A673 (cell line): ENCODE measurements at regions of chrX and their contacts with region 1.

Region 1: DNA sequence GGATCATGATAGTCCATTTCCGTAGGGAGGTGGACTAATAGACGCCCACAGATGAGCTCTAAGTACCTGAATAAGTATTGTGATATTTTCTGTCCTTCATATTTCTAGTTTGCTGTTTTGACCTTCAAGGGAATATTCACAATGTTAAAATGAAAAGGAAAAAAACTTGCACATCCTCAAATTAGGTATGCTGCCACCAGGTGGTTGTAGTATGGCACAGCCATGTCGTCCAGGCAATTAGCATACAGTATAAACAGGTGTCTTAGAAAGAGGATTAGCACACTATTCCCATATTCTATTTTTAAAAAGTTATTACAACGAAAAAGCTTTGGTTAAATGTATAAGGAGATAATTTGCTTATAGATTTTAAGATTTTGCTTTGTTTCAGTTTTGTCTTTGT is 802.0 kb downstream of the RPA4 start:
- DNase-seq: peak; percentile 56
- H3K4me3 ChIP-seq: no peak overlapping the region
- H3K27ac ChIP-seq: no peak overlapping the region
- H3K4me1 ChIP-seq: no peaks in the 10 kb centered on the region
- H3K27me3 ChIP-seq: no peaks in the 10 kb centered on the region
- CTCF ChIP-seq: peak; percentile 77

Region 2: GRCh38 chrX:96770315-96770714 is 915.4 kb before region 1 on chrX:
- CTCF ChIA-PET with region 1: no interaction called
- POLR2A ChIA-PET with region 1: no interaction called
- intact Hi-C with region 1: loop called (anchors 5 kb)
- DNase-seq: peak; percentile 38
- H3K4me3 ChIP-seq: no peak overlapping the region
- H3K27ac ChIP-seq: no peak overlapping the region
- H3K4me1 ChIP-seq: no peaks in the 10 kb centered on the region
- H3K27me3 ChIP-seq: no peaks in the 10 kb centered on the region
- CTCF ChIP-seq: peak; percentile 61

Region 3: DNA sequence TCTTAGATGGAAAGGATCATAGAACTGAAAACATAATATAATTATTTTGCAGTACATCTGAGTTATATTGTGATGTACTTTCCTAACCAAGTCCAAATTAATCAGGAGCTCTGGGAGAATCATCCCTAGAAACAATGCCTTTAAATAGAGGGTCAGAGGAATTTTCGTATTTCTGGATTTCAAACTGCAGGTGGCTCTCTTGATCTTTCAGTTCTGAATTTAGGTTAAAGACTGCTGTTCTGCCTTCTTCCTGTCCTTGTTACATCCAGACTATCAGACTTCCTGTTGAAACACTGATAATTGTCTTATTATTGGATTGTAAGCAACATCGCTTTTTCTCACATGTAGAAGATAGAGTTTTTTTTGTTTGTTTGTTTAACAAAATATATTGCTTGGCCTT is 659.3 kb before region 1 on chrX:
- CTCF ChIA-PET with region 1: no interaction called
- POLR2A ChIA-PET with region 1: no interaction called
- intact Hi-C with region 1: loop called (anchors 10 kb)
- DNase-seq: peak; percentile 48
- H3K4me3 ChIP-seq: no peak overlapping the region
- H3K27ac ChIP-seq: no peak overlapping the region
- H3K4me1 ChIP-seq: peaks cover 3% of the 10 kb centered on the region
- H3K27me3 ChIP-seq: no peaks in the 10 kb centered on the region
- CTCF ChIP-seq: peak; percentile 43

Region 4: GRCh38 chrX:97267381-97268181 is 418.2 kb before region 1 on chrX:
- CTCF ChIA-PET with region 1: no interaction called
- POLR2A ChIA-PET with region 1: no interaction called
- intact Hi-C with region 1: no loop called
- DNase-seq: peak; percentile 79
- H3K4me3 ChIP-seq: no peak overlapping the region
- H3K27ac ChIP-seq: no peak overlapping the region
- H3K4me1 ChIP-seq: peaks cover 8% of the 10 kb centered on the region
- H3K27me3 ChIP-seq: peaks cover 3% of the 10 kb centered on the region
- CTCF ChIP-seq: no peak

Region 5: GRCh38 chrX:97482666-97483300 is 203.0 kb before region 1 on chrX:
- CTCF ChIA-PET with region 1: no interaction called
- POLR2A ChIA-PET with region 1: no interaction called
- intact Hi-C with region 1: no loop called
- DNase-seq: peak; percentile 24
- H3K4me3 ChIP-seq: no peak overlapping the region
- H3K27ac ChIP-seq: no peak overlapping the region
- H3K4me1 ChIP-seq: no peaks in the 10 kb centered on the region
- H3K27me3 ChIP-seq: no peaks in the 10 kb centered on the region
- CTCF ChIP-seq: no peak